Head of caudate nucleus (tissue), 42 donors: ENCODE measurements at regions of chr3 and their contacts with region 1.

Region 1: GRCh38 chr3:57755668-57756527 is at the start of gene SLMAP:
- DNase-seq: peak; percentile 95 to 99 (median 98)

Region 2: GRCh38 chr3:57555738-57556458 is 200.0 kb before region 1 on chr3 and contains the start of gene PDE12:
- intact Hi-C with region 1: loop called (anchors 5 kb)
- DNase-seq: peak; percentile 79 to 96 (median 91)

Region 3: DNA sequence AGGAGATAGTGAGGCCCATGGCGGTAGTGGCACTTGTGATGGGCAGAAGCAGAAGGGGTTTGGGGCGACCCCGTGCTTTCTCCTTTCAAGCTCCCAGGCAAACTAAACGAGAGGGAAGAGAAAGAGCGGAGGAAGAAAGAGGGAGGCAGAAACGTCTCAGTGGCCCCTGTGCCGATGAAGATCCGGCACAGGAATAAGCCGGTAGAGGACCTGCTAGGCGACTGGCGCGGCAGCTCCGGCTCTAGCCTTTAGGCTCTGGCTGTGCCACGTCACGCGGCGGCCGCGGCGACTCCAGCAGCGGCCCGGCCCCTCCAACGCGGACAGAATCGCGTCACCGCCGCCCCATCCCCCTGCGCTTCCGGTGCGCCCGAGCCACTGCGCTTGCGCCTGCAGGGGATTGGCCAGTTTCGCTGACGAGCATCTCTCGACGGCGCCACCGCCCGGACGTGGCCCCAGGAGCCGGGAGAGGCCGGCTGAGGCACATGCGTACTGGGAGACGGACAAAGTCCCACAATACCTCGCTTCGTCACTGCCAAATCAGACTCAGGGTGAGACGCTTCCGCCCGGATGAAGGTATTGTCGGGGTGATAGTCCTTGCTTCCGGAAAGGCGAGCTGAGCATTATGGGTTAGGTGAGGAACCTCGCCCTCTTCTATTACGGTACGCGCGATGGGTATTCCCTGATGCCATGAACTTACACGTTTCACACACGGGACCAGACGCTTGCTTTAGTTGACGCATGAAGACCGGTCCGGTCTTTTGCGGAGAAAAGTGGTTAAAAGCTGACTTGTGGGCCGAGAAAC is 158.6 kb before region 1 on chr3 and contains the start of gene ARF4:
- intact Hi-C with region 1: loop called (anchors 5 kb)
- DNase-seq: peak; percentile 96 to 99 (median 98)

Region 4: GRCh38 chr3:57692259-57693147 is 63.4 kb before region 1 on chr3 and contains the start of gene DENND6A:
- intact Hi-C with region 1: loop called (anchors 2 kb)
- DNase-seq: peak; percentile 26 to 99 (median 97)

Region 5: GRCh38 chr3:57820479-57820878 is 64.6 kb after region 1 on chr3:
- intact Hi-C with region 1: loop called (anchors 5 kb)
- DNase-seq: no peak